Activated B cell treated with CpG ODN at 0.5 μM for 24 hours (primary cell): ENCODE measurements at regions of chr9 and their contacts with region 1.

Region 1: GRCh38 chr9:78369639-78370219 is 72.8 kb downstream of the PSAT1 start:
- DNase-seq: peak; percentile 23
- ATAC-seq: no peak
- H3K4me3 Mint-ChIP-seq: no peak overlapping the region
- H3K27ac Mint-ChIP-seq: no peak overlapping the region
- H3K4me1 Mint-ChIP-seq: no peaks in the 10 kb centered on the region
- H3K27me3 Mint-ChIP-seq: peaks cover 23% of the 10 kb centered on the region
- CTCF ChIP-seq: peak; percentile 23

Region 2: GRCh38 chr9:78261403-78262001 is 108.2 kb before region 1 on chr9:
- CTCF ChIA-PET with region 1: interaction called, 14 read pairs
- POLR2A ChIA-PET with region 1: interaction called, 4 read pairs
- intact Hi-C with region 1: loop called (anchors 1 kb)
- DNase-seq: no peak
- ATAC-seq: no peak
- H3K4me3 Mint-ChIP-seq: no peak overlapping the region
- H3K27ac Mint-ChIP-seq: no peak overlapping the region
- H3K4me1 Mint-ChIP-seq: no peaks in the 10 kb centered on the region
- H3K27me3 Mint-ChIP-seq: no peaks in the 10 kb centered on the region
- CTCF ChIP-seq: peak; percentile 96